ENCODE measurements at regions of chr17 and their contacts with region 1.

Region 1: DNA sequence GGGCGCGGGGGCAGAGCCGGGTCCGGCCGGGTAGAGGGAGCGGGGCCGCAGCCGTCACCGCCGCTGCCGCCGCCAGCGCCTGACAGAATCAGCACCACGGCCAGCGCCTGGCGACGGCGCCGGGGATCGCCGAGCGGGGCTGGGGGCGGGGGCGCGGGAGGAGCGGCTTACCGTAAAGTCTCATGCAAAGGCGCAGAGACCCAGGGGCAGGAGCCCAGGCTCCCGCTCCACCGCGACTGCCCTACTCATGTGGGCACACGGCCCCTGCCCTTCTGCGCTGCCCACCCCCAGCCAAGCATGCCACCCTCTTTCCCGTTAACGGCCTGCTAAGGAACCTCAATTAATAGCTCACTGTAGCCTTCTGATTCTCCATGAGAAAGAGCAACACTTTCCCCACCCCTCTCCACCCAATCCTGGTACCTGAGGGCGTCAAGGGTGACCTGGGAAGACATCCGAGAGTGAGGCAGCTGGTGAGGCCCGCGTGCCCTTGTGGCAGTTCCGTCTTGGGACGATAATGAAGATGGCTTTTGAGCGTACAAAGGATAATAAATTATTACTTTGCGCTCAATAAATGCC is at the start of gene SEZ6:
- DNase-seq: peak; percentile 29 to 94
- H3K4me3 ChIP-seq: peak within 1 kb of the TSS; percentile 36 to 54 (median 45)
- H3K27ac ChIP-seq: no peak within 1 kb of the TSS
- H3K4me1 ChIP-seq: peaks cover 22 to 59% (median 37%) of the 10 kb centered on the region in 4 experiments
- H3K27me3 ChIP-seq: peaks cover 6 to 25% (median 20%) of the 10 kb centered on the region in 4 experiments; a peak in 6 of 7 replicates
- CTCF ChIP-seq: no peak
- EP300 ChIP-seq: peak in 1 of 2 experiments; percentile 87; a peak in 1 of 3 replicates
- POLR2A ChIP-seq: no peak
- RAD21 ChIP-seq: peak; percentile 15 to 28; a peak in 2 of 4 replicates
- total RNA-seq, gene SEZ6: 6.9 and 7.8 TPM in 2 replicates

Region 2: GRCh38 chr17:28728364-28729088 is 277.5 kb before region 1 on chr17 and contains the start of gene NEK8:
- CTCF ChIA-PET with region 1: no interaction called
- POLR2A ChIA-PET with region 1: no interaction called
- DNase-seq: peak in 1 of 2 experiments; percentile 99
- H3K4me3 ChIP-seq: peak within 1 kb of the TSS; percentile 81 to 97 (median 89)
- H3K27ac ChIP-seq: peak within 1 kb of the TSS; percentile 93
- H3K4me1 ChIP-seq: 0 out of 7 replicates have a peak, but pooled peaks cover 0 to 4% (median 0%) of the 10 kb centered on the region in 4 experiments
- H3K27me3 ChIP-seq: no peaks in the 10 kb centered on the region
- CTCF ChIP-seq: no peak
- EP300 ChIP-seq: no peak
- POLR2A ChIP-seq: peak in 1 of 2 experiments; percentile 69; a peak in 1 of 3 replicates
- RAD21 ChIP-seq: no peak
- total RNA-seq, gene NEK8: 14.9 and 16.8 TPM in 2 replicates

Region 3: GRCh38 chr17:28925912-28926365 is 80.1 kb before region 1 on chr17:
- CTCF ChIA-PET with region 1: no interaction called
- POLR2A ChIA-PET with region 1: no interaction called
- DNase-seq: no peak
- H3K4me3 ChIP-seq: no peak overlapping the region
- H3K27ac ChIP-seq: no peak overlapping the region
- H3K4me1 ChIP-seq: no peaks in the 10 kb centered on the region
- H3K27me3 ChIP-seq: no peaks in the 10 kb centered on the region
- CTCF ChIP-seq: no peak
- EP300 ChIP-seq: no peak
- POLR2A ChIP-seq: no peak
- RAD21 ChIP-seq: no peak

Region 4: GRCh38 chr17:28992625-28993600 is 13.1 kb before region 1 on chr17:
- CTCF ChIA-PET with region 1: interaction called, 42 read pairs
- POLR2A ChIA-PET with region 1: interaction called, 8 read pairs
- DNase-seq: no peak
- H3K4me3 ChIP-seq: no peak overlapping the region
- H3K27ac ChIP-seq: no peak overlapping the region
- H3K4me1 ChIP-seq: peaks cover 0 to 16% (median 7%) of the 10 kb centered on the region in 4 experiments; a peak in 5 of 7 replicates
- H3K27me3 ChIP-seq: no peaks in the 10 kb centered on the region; a peak in 3 of 7 replicates
- CTCF ChIP-seq: no peak
- EP300 ChIP-seq: no peak
- POLR2A ChIP-seq: no peak
- RAD21 ChIP-seq: peak in 1 of 2 experiments; percentile 30; a peak in 1 of 4 replicates

Region 5: GRCh38 chr17:29019475-29020181 is 13.6 kb after region 1 on chr17:
- CTCF ChIA-PET with region 1: interaction called, 21 read pairs
- POLR2A ChIA-PET with region 1: interaction called, 31 read pairs
- DNase-seq: peak in 1 of 2 experiments; percentile 72
- H3K4me3 ChIP-seq: peak overlapping the region in 2 of 4 experiments; percentile 23 to 45; a peak in 4 of 8 replicates
- H3K27ac ChIP-seq: no peak overlapping the region
- H3K4me1 ChIP-seq: peaks cover 20 to 37% (median 32%) of the 10 kb centered on the region in 4 experiments
- H3K27me3 ChIP-seq: peaks cover 0 to 3% (median 0%) of the 10 kb centered on the region in 4 experiments; a peak in 3 of 7 replicates
- CTCF ChIP-seq: no peak
- EP300 ChIP-seq: no peak
- POLR2A ChIP-seq: no peak
- RAD21 ChIP-seq: no peak

Region 6: GRCh38 chr17:29032857-29033197 is 26.8 kb after region 1 on chr17:
- CTCF ChIA-PET with region 1: interaction called, 9 read pairs
- POLR2A ChIA-PET with region 1: interaction called, 17 read pairs
- DNase-seq: no peak
- H3K4me3 ChIP-seq: peak overlapping the region in 2 of 4 experiments; percentile 32 to 47; a peak in 3 of 8 replicates
- H3K27ac ChIP-seq: peak overlapping the region; percentile 72; the same call in 1 of the 2 replicates
- H3K4me1 ChIP-seq: peaks cover 11 to 31% (median 22%) of the 10 kb centered on the region in 4 experiments
- H3K27me3 ChIP-seq: no peaks in the 10 kb centered on the region
- CTCF ChIP-seq: no peak
- EP300 ChIP-seq: peak in 1 of 2 experiments; percentile 64; a peak in 1 of 3 replicates
- POLR2A ChIP-seq: no peak; a peak in 1 of 3 replicates
- RAD21 ChIP-seq: no peak

Region 7: DNA sequence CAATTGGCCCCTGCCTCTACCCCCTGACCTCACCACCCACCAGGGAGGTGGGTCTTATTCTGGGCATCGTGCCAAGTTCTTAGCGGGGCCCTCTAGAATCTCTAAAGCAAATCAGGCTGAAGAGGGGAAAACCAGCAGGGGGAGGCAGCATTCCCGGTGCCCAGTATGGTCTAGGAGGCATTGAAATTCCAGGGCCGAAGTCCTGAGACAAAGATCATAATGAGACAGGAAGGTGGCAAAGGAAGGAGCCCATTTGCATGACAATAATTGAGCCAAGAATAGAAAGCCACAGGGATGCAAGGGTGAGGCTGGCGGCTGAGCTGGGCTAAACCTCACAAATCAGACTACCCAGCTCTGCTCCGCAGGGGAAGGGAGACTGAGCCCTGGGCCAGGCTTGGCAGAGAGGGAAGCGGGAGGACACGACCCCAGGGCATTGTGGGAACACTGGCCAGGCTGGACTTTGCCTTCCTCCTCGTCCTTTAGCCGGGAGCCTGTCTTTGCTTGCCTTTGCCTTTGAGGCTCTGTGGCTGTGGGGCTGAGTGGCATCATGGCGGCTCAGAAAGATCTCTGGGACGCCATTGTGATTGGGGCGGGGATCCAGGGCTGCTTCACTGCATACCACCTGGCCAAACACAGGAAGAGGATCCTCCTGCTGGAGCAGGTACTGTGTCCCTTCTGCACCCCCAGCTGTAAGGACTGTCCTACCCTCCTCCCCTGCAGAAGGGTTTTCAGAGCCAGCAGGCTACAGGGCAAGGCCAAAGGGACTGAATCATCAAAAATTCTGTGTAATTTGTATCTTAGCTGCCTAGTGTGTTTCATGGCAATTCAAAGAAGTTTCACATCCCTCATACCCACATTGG is 36.9 kb after region 1 on chr17 and contains the start of gene PIPOX:
- CTCF ChIA-PET with region 1: interaction called, 11 read pairs
- POLR2A ChIA-PET with region 1: interaction called, 6 read pairs
- DNase-seq: peak; percentile 81 to 94
- H3K4me3 ChIP-seq: peak within 1 kb of the TSS in 3 of 4 experiments; percentile 0 to 25 (median 15); a peak in 3 of 8 replicates
- H3K27ac ChIP-seq: peak within 1 kb of the TSS; percentile 92
- H3K4me1 ChIP-seq: peaks cover 14 to 27% (median 20%) of the 10 kb centered on the region in 4 experiments
- H3K27me3 ChIP-seq: no peaks in the 10 kb centered on the region
- CTCF ChIP-seq: peak; percentile 26 to 54 (median 45)
- EP300 ChIP-seq: peak in 1 of 2 experiments; percentile 85; a peak in 1 of 3 replicates
- POLR2A ChIP-seq: peak; percentile 60 to 89
- RAD21 ChIP-seq: peak in 1 of 2 experiments; percentile 63; a peak in 2 of 4 replicates
- total RNA-seq, gene PIPOX: 55.5 and 57.2 TPM in 2 replicates

Region 8: DNA sequence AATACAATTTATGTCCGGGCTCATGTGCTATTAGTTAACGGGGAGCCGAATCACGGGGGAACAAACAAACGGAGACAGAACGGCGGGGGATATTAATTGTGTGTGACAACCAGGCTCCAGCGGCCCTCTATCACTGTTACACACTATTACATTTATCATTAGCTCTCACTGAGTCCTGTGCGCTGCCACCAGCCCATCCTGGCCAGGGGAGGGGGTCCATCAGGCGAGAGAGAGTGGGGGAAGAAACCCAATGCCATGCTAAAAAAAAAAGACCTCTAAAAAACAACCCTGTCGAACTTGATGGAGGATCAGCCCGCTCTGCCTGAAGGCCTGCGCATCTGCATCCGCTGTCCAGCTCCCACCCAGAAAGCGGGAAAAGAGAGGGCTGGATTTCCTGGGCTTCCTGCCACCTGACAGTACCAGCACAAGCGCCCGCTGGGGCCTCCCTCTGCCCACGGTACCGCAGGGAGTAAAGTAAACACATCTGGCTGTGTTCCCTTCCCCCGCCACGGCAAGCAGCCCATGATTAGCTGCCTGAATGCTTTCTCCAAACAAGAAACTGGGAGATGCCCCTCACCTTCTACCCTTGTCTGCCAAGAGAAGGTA is 78.6 kb after region 1 on chr17:
- CTCF ChIA-PET with region 1: interaction called, 15 read pairs
- POLR2A ChIA-PET with region 1: no interaction called
- DNase-seq: no peak
- H3K4me3 ChIP-seq: peak overlapping the region in 1 of 4 experiments; percentile 23; a peak in 1 of 8 replicates
- H3K27ac ChIP-seq: no peak overlapping the region
- H3K4me1 ChIP-seq: peaks cover 12 to 36% (median 17%) of the 10 kb centered on the region in 4 experiments
- H3K27me3 ChIP-seq: no peaks in the 10 kb centered on the region; a peak in 1 of 7 replicates
- CTCF ChIP-seq: no peak
- EP300 ChIP-seq: no peak
- POLR2A ChIP-seq: no peak
- RAD21 ChIP-seq: no peak; a peak in 1 of 4 replicates

Measured in H1 (cell line).